Activated CD4-positive, alpha-beta memory T cell treated with anti-CD3 and anti-CD28 coated beads, Interleukin-2, amount 10 ng/mL, durations not matched to agents 7 days and 5 days (primary cell): ENCODE measurements at regions of chr15 and their contacts with region 1.

Region 1: DNA sequence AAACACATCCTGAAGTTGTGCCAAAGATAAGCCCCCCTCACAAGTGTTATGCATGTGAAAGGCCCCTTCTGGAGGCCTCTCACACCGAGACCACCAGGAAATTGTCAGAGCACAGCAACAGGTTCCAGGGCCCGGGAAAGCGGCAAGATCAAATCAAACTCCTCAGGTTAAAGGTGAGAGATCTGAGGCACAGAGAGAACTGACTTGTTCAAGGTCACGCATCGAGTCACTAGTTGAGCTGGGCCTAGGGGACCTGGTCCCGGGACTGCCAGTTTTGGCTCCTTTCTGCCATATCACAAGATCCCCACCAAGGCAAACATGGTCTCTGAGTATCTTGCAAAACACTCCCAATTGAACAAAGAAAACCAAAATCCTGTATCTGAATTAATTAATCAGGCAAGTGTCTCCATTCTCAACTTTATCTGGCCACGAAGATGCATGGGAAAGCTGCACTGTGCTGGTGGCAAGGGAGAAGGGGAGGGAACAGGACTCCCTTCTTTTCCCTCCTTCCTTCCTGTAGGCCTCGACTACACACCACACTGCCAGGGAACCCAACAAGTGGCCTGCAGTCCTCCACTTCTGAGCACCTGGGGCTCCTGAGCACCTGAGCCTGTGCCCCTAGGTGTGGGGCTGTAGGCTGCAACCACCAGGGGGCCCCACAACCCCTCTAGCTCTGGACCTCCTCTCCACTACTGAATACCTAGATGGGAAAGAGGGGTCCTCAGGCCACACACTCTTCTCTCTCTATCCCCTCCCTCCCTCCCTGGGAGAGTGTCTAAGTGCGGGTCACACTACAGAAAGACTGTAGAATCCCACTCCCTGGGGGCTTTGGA is 37.3 kb downstream of the ANP32A start:
- DNase-seq: peak; percentile 69
- H3K4me3 Mint-ChIP-seq: no peak overlapping the region
- H3K27ac Mint-ChIP-seq: peak overlapping the region; percentile 37
- H3K4me1 Mint-ChIP-seq: peaks cover 40% of the 10 kb centered on the region
- H3K27me3 Mint-ChIP-seq: no peaks in the 10 kb centered on the region

Region 2: GRCh38 chr15:68795298-68795848 is 11.9 kb after region 1 on chr15:
- CTCF ChIA-PET with region 1: interaction called, 11 read pairs
- POLR2A ChIA-PET with region 1: interaction called, 8 read pairs
- DNase-seq: peak; percentile 74
- H3K4me3 Mint-ChIP-seq: peak overlapping the region; percentile 14
- H3K27ac Mint-ChIP-seq: peak overlapping the region; percentile 53
- H3K4me1 Mint-ChIP-seq: peaks cover 93% of the 10 kb centered on the region
- H3K27me3 Mint-ChIP-seq: no peaks in the 10 kb centered on the region

Region 3: GRCh38 chr15:68806220-68807060 is 23.0 kb after region 1 on chr15:
- CTCF ChIA-PET with region 1: no interaction called
- POLR2A ChIA-PET with region 1: no interaction called
- DNase-seq: no peak
- H3K4me3 Mint-ChIP-seq: no peak overlapping the region
- H3K27ac Mint-ChIP-seq: no peak overlapping the region
- H3K4me1 Mint-ChIP-seq: peaks cover 51% of the 10 kb centered on the region
- H3K27me3 Mint-ChIP-seq: no peaks in the 10 kb centered on the region

Region 4: DNA sequence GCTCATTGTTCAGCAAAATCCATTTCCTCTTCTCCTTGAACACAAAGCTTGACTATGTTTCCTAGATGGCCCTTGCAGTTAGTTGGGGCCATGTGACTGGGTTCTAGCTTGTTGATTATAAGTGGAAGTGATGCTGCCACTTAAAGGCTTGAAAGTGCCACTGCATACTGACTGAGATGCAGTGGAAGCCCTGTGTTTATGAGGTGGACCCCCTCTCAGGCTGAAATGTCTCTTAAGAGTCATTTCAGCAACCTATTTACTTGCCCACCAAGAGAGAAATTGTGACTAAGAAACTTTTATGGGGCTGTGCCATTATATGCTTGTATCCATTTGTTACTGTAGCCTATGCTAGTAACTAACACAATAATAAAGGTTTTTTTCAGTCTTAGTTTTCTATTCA is 45.6 kb after region 1 on chr15:
- CTCF ChIA-PET with region 1: interaction called, 25 read pairs
- POLR2A ChIA-PET with region 1: interaction called, 4 read pairs
- DNase-seq: no peak
- H3K4me3 Mint-ChIP-seq: no peak overlapping the region
- H3K27ac Mint-ChIP-seq: no peak overlapping the region
- H3K4me1 Mint-ChIP-seq: peaks cover 15% of the 10 kb centered on the region
- H3K27me3 Mint-ChIP-seq: peaks cover 22% of the 10 kb centered on the region